ENCODE measurements at regions of chr18 and their contacts with region 1.

Region 1: DNA sequence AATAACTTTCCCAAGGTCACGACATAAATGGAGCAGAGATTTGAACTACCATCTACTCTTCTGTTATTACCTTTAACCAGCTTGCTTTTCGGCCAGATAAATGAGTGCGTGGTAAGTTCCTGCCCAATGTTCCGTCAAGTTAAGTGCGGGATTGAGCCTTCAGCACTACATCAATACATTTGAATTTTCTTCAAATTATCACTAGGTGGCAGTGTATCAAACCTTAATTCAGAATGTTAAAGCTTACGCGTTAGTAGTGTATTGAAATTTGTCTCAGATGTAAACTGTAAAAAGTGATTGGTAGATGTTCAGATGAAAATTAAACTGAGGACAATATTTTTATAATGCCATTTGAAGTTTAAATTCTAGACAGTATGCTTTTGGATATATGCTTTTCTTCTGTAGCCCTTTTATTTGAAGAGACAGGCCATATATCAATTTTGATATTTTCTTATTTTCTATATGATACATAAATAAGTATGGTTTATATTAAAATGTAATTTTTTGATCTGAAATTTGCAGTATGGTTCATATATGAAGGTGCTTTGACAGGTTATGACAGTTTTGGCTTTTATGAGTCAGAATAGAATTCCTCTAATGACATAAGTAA is 681.3 kb downstream of the ADCYAP1 start:
- DNase-seq: peak; percentile 8
- H3K4me3 ChIP-seq: no peak overlapping the region; a peak in 1 of 4 replicates
- H3K27ac ChIP-seq: no peak overlapping the region
- H3K4me1 ChIP-seq: no peaks in the 10 kb centered on the region
- H3K27me3 ChIP-seq: 0 out of 2 replicates have a peak, but pooled peaks cover 4% of the 10 kb centered on the region
- CTCF ChIP-seq: peak; percentile 70
- EP300 ChIP-seq: no peak
- RAD21 ChIP-seq: peak; percentile 52

Region 2: DNA sequence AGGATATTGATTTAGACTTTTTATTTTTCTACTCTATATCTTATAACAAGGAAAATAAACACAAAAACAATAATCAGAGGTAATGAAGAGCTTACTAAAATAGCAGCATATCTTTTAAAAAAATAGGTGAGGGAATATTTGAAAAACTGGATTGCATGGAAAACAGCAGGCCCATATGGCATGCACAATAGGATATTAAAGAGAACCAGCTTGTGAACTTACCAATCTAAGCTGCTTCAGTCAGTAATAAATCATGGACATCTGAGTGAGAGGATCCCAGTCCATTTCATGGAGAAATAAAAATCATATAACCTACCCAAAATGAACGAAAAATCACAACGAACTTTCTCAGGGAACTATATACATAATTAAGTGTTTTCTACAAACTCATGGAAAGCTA is 46.7 kb before region 1 on chr18:
- CTCF ChIA-PET with region 1: no interaction called
- POLR2A ChIA-PET with region 1: no interaction called
- DNase-seq: no peak
- H3K4me3 ChIP-seq: no peak overlapping the region
- H3K27ac ChIP-seq: no peak overlapping the region
- H3K4me1 ChIP-seq: no peaks in the 10 kb centered on the region
- H3K27me3 ChIP-seq: no peaks in the 10 kb centered on the region
- CTCF ChIP-seq: no peak
- EP300 ChIP-seq: no peak
- RAD21 ChIP-seq: no peak

Region 3: GRCh38 chr18:1573732-1574131 is 12.3 kb before region 1 on chr18:
- CTCF ChIA-PET with region 1: interaction called, 22 read pairs
- POLR2A ChIA-PET with region 1: no interaction called
- DNase-seq: no peak
- H3K4me3 ChIP-seq: no peak overlapping the region
- H3K27ac ChIP-seq: no peak overlapping the region
- H3K4me1 ChIP-seq: no peaks in the 10 kb centered on the region
- H3K27me3 ChIP-seq: no peaks in the 10 kb centered on the region
- CTCF ChIP-seq: no peak
- EP300 ChIP-seq: no peak
- RAD21 ChIP-seq: no peak

Region 4: DNA sequence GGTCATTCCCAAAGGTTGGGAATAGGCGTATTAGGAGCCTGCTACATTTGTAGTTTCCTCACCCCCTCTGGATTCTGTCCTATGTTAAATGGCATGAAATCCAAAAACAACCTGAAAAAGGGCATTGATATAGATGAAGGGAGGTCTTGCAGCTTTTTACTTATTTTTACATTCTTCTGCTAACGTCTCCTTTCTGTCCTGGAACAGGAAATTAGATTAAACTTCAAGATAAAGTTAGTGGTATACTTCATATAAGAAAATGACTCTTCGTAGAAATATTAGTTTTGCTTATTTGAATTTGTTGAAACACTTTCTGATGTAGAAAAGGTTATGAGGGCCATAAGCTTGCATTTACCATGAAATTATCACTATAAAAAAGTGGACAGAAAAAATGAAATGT is 13.2 kb after region 1 on chr18:
- CTCF ChIA-PET with region 1: interaction called, 33 read pairs
- POLR2A ChIA-PET with region 1: no interaction called
- DNase-seq: no peak
- H3K4me3 ChIP-seq: no peak overlapping the region
- H3K27ac ChIP-seq: no peak overlapping the region
- H3K4me1 ChIP-seq: no peaks in the 10 kb centered on the region
- H3K27me3 ChIP-seq: no peaks in the 10 kb centered on the region
- CTCF ChIP-seq: no peak
- EP300 ChIP-seq: no peak
- RAD21 ChIP-seq: no peak

Measured in SK-N-SH (cell line).